ENCODE measurements at regions of chr4 and their contacts with region 1.

Region 1: GRCh38 chr4:142126890-142127497 is 490.6 kb downstream of the IL15 start:
- DNase-seq: no peak
- ATAC-seq: peak; percentile 51 to 59
- H3K4me3 ChIP-seq: no peak overlapping the region
- H3K27ac ChIP-seq: no peak overlapping the region
- H3K4me1 ChIP-seq: peaks cover 10% of the 10 kb centered on the region
- H3K27me3 ChIP-seq: no peaks in the 10 kb centered on the region
- CTCF ChIP-seq: peak; percentile 80

Region 2: GRCh38 chr4:142840516-142841123 is 713.6 kb after region 1 on chr4:
- intact Hi-C with region 1: loop called (anchors 5 kb)
- DNase-seq: no peak
- ATAC-seq: no peak
- H3K4me3 ChIP-seq: no peak overlapping the region
- H3K27ac ChIP-seq: no peak overlapping the region
- H3K4me1 ChIP-seq: peaks cover 7% of the 10 kb centered on the region
- H3K27me3 ChIP-seq: peaks cover 2% of the 10 kb centered on the region
- CTCF ChIP-seq: peak; percentile 59